H1 (cell line): ENCODE measurements at regions of chr17 and their contacts with region 1.

Region 1: DNA sequence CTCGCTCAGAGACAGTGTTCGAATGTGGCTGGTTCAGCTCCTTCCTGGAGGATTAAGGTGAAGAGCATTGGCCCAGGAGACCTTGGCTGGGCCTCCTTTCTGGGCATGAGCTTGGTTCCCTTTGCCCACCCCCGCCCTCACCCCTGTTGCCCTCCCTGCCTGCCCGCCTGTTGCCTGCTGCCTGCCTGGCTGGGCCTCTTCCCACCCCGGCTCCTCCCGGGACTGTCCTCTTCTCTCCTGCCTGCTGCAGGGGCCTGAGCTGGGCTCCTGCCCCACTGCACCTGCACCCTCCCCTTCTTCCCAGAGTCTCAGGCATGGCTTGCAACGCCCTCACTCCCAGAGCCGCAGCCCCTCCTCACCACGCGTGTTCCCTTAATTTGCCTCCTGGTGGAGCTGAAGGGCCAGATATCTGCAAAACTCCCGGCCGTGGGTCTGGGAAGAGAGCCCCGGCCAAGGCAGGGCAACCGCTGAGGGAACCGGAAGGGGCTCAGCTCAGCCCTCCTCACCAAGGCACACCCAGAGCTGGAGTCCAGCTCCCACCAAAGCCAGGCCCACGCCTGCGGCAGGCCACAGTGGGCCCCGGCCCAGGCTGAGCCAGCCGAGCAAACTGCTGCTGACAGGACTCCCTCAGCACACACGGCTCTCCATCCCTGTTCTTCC is 31.2 kb downstream of the MNT start:
- DNase-seq: peak in 1 of 2 experiments; percentile 77
- H3K4me3 ChIP-seq: no peak overlapping the region
- H3K27ac ChIP-seq: no peak overlapping the region
- H3K4me1 ChIP-seq: peaks cover 0 to 12% (median 5%) of the 10 kb centered on the region in 4 experiments; a peak in 3 of 7 replicates
- H3K27me3 ChIP-seq: no peaks in the 10 kb centered on the region
- CTCF ChIP-seq: peak; percentile 45 to 54 (median 48)
- EP300 ChIP-seq: no peak
- POLR2A ChIP-seq: no peak
- RAD21 ChIP-seq: peak; percentile 53 to 64

Region 2: DNA sequence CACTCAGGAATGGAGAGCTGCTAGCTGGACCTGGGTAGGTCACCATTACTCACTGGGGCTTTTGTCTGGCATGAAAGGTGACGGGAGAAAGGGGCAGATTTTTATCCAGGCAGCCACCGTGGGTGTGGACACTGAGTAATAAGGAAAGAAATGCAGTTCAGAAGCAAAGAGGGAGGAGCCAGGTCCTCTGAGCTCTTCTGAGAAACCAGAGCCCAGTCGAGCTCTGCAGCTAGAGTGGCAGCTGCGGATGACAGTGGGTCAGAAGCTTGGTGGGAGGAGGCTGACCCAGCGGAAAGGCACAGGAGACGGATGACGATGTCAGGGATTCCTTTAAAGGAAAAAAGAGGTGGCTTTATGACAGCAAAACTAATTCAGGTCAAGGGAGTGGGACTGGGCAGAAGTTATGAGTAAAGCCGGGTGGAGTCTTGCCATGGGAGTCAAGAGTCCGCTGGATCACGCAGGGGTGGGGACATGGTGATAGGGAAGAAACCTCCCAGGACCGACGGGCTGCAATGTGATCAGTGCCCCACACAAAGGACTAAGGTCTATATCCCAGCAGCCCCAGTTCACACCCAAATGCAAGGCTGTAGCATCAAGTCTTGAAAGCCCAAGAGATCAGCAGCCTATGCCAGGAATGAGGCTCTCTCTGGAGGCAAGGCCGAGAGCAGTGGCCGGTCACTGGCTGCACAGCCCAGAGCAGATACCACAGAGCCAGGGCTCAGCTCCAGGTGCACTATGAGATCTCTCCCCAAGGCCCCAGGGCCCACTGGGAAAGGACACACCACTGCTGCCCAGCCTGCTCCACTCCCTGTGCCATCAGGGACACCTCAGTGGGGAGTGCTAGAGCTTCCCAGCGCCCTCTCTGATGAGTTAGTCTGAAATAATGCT is 37.5 kb after region 1 on chr17:
- CTCF ChIA-PET with region 1: interaction called, 10 read pairs
- POLR2A ChIA-PET with region 1: interaction called, 3 read pairs
- DNase-seq: no peak
- H3K4me3 ChIP-seq: no peak overlapping the region
- H3K27ac ChIP-seq: no peak overlapping the region
- H3K4me1 ChIP-seq: peaks cover 0 to 3% (median 0%) of the 10 kb centered on the region in 4 experiments; a peak in 2 of 7 replicates
- H3K27me3 ChIP-seq: peaks cover 0 to 2% (median 0%) of the 10 kb centered on the region in 4 experiments; a peak in 2 of 7 replicates
- CTCF ChIP-seq: no peak
- EP300 ChIP-seq: no peak
- POLR2A ChIP-seq: no peak
- RAD21 ChIP-seq: no peak